HepG2 (cell line): ENCODE measurements at regions of chr10 and their contacts with region 1.

Region 1: GRCh38 chr10:103111031-103111917 is 81.8 kb downstream of the NT5C2 start:
- DNase-seq: peak; percentile 15
- ATAC-seq: peak; percentile 65
- H3K4me3 ChIP-seq: no peak overlapping the region
- H3K27ac ChIP-seq: peak overlapping the region; percentile 6
- H3K4me1 ChIP-seq: peaks cover 37% of the 10 kb centered on the region
- H3K27me3 ChIP-seq: no peaks in the 10 kb centered on the region
- CTCF ChIP-seq: no peak
- EP300 ChIP-seq: no peak
- POLR2A ChIP-seq: no peak
- RAD21 ChIP-seq: no peak

Region 2: DNA sequence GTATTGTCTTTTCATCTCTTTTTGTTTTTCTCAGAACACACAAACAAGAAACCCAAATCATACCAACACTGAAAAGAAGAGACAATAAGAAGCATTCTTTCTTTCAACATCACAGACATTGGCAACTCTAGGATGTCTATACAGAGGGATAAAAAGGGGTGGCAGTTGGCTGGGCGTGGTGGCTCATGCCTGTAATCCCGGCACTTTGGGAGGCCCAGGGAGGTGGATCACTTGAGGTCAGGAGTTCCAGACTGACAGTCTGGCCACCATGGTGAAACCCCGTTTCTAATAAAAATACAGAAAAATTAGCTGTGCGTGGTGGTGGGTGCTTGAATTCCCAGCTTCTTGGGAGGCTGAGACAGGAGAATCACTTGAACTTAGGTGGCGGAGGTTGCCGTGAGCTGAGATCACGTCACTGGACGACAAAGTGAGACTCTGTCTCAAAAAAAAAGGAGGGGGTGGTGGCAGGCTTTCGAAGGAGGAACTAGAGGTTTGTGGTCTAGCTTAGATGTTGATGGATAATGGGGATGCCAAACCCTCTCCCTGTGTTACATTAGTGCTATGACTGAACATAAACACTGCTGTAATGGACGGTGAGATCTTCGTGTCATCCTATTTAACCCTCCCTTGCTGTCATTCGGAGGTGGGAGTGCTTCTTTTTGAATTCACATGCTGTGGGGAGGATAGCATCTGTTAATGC is 183.8 kb before region 1 on chr10:
- CTCF ChIA-PET with region 1: no interaction called
- POLR2A ChIA-PET with region 1: no interaction called
- in situ Hi-C with region 1: no loop called
- intact Hi-C with region 1: no loop called
- DNase-seq: no peak
- ATAC-seq: no peak
- H3K4me3 ChIP-seq: no peak overlapping the region
- H3K27ac ChIP-seq: no peak overlapping the region
- H3K4me1 ChIP-seq: peaks cover 21% of the 10 kb centered on the region
- H3K27me3 ChIP-seq: no peaks in the 10 kb centered on the region; a peak in 1 of 5 replicates
- CTCF ChIP-seq: no peak
- EP300 ChIP-seq: no peak
- POLR2A ChIP-seq: no peak
- RAD21 ChIP-seq: no peak

Region 3: GRCh38 chr10:103044942-103045489 is 66.3 kb before region 1 on chr10:
- CTCF ChIA-PET with region 1: no interaction called
- POLR2A ChIA-PET with region 1: no interaction called
- in situ Hi-C with region 1: no loop called
- intact Hi-C with region 1: no loop called
- DNase-seq: no peak
- ATAC-seq: no peak
- H3K4me3 ChIP-seq: no peak overlapping the region
- H3K27ac ChIP-seq: peak overlapping the region; percentile 19
- H3K4me1 ChIP-seq: peaks cover 27% of the 10 kb centered on the region
- H3K27me3 ChIP-seq: no peaks in the 10 kb centered on the region
- CTCF ChIP-seq: no peak
- EP300 ChIP-seq: no peak
- POLR2A ChIP-seq: no peak
- RAD21 ChIP-seq: no peak

Region 4: DNA sequence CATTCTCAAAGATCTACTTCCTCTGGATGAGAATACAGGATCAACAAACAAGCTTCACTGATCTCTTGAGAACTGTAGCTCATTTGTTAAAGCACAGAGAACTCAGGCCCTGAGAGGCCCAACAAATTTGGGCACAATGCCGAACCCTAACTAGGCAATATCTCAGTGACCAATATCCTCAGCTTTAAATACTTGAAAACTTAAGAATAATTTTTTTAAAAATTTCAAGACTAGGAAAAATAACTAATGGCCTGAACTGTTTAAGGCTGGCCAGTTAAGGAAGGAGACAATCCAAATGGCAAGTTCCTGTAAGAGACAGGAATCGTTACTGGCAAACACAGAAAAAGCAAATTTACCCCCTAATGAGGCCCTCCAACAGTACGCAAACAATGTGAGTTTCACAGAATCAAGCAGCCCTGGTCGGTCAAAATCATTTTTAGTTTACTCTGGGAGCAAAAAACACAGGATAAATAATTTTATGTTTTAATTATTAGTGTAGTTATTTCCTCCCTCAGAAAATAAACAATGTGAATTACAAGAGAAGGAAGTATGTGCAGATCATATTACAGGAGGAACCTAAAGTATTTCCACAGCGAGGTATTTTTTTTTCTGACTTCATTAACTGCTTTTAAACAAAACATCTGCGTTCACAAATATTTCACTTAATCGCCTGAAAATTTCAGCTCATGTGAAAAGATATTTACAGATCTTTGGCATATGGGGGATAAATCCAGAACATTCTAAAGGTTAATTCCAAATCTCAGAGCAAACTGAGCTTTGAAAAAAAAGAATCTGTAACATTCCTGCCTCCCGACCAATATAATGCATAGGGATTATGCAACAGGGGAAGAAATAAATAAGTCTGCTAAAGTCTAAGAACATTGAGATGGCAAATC is 42.3 kb after region 1 on chr10:
- CTCF ChIA-PET with region 1: no interaction called
- POLR2A ChIA-PET with region 1: no interaction called
- in situ Hi-C with region 1: no loop called
- intact Hi-C with region 1: loop called (anchors 5 kb)
- DNase-seq: peak; percentile 51
- ATAC-seq: peak; percentile 71
- H3K4me3 ChIP-seq: peak overlapping the region; percentile 57 to 73 (median 59)
- H3K27ac ChIP-seq: peak overlapping the region; percentile 78
- H3K4me1 ChIP-seq: peaks cover 73% of the 10 kb centered on the region
- H3K27me3 ChIP-seq: no peaks in the 10 kb centered on the region
- CTCF ChIP-seq: no peak
- EP300 ChIP-seq: peak in 1 of 2 experiments; percentile 59; a peak in 1 of 4 replicates
- POLR2A ChIP-seq: no peak
- RAD21 ChIP-seq: no peak